ENCODE measurements at regions of chr9 and their contacts with region 1.

Region 1: GRCh38 chr9:130707225-130707976 is 13.8 kb downstream of the EXOSC2 start:
- DNase-seq: peak in 2 of 3 donors; percentile 53 to 68
- ATAC-seq: peak; percentile 57 to 68 (median 64)
- H3K4me3 ChIP-seq: no peak overlapping the region
- H3K27ac ChIP-seq: no peak overlapping the region
- H3K4me1 ChIP-seq: no peaks in the 10 kb centered on the region
- H3K27me3 ChIP-seq: no peaks in the 10 kb centered on the region
- CTCF ChIP-seq: peak; percentile 66 to 83 (median 80)
- POLR2A ChIP-seq: no peak

Region 2: DNA sequence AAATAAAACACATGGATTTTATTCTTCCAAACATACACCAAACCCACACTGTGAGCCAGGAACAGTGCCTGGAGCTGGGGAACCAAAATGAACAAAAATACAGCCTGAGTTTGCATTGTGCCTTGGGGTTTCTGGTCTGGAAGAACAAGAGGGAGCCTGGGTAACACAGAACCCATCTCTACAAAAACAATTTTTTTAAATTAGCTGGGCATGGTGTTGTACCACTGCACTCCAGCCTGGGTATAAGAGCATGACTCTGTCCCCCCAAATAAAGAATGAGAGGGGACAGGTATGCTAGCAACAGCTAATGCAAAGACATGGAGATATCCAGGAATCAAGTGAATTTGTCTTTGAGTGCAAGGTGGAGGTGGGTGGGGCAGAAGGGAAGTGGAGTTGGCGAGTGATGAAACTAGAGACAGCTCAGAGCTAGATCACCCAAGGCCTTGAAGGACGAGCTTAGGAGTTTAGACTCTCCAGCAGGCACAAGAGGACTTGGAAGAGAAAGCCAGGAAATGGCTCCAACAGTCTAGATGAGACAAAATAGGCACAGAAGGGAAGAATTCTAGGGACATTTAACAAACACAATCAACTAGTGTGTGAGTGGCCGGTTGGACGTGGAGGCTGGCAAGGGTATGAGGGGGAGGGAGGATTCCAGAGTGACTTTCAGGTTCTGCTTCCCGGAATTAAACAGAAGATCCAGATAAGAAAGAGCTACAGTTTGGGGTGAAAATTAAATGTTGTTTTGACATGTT is 711.8 kb before region 1 on chr9:
- intact Hi-C with region 1: no loop called
- DNase-seq: no peak
- ATAC-seq: peak; percentile 25 to 66 (median 50)
- H3K4me3 ChIP-seq: no peak overlapping the region
- H3K27ac ChIP-seq: peak overlapping the region; percentile 6 to 52 (median 33)
- H3K4me1 ChIP-seq: peaks cover 0 to 9% (median 0%) of the 10 kb centered on the region in 4 donors
- H3K27me3 ChIP-seq: no peaks in the 10 kb centered on the region
- CTCF ChIP-seq: no peak
- POLR2A ChIP-seq: no peak

Region 3: DNA sequence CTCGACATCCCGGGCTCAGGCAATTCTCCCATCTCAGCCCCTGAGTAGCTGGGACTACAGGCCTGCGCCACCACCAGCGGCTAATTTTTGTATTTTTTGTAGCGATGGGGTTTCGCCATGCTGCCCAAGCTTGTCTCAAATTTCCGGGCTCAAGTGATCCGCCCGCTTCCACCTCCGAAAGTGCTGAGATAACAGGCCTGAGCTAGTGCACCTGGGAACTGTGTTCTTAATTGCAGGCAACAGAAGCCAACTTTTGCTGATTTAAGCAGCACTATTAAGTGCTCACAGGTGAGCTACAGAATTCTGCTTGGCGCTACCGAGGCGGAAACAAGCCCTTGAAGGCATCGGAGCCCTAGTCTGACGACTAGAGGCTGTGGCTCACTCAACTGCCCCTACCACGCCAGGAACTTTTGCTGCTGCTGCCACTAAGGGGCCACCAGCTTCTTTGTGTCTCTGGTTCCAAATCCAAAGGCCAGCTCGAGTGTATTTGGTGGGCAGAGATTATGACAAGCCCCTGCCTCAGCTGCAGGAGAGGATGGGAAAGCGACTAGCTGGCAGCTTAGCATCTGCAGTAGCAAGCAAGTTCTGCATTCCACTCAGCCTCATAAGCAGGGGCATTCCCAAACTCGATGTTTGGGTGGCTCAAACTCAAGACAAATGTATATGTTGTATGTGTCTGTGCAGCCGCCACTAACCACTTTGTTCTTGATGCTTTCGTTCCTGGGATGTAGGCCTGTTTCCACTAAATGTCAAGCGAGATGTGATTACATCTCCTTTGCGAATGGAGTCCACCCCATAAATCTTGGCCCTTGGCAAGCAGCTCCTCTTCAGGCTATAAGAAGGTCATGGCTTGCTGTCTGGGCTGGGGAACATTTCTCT is 452.4 kb before region 1 on chr9:
- intact Hi-C with region 1: no loop called
- DNase-seq: peak in 1 of 3 donors; percentile 16
- ATAC-seq: no peak
- H3K4me3 ChIP-seq: no peak overlapping the region
- H3K27ac ChIP-seq: no peak overlapping the region
- H3K4me1 ChIP-seq: peaks cover 0 to 14% (median 6%) of the 10 kb centered on the region in 4 donors
- H3K27me3 ChIP-seq: no peaks in the 10 kb centered on the region
- CTCF ChIP-seq: no peak
- POLR2A ChIP-seq: no peak

Region 4: DNA sequence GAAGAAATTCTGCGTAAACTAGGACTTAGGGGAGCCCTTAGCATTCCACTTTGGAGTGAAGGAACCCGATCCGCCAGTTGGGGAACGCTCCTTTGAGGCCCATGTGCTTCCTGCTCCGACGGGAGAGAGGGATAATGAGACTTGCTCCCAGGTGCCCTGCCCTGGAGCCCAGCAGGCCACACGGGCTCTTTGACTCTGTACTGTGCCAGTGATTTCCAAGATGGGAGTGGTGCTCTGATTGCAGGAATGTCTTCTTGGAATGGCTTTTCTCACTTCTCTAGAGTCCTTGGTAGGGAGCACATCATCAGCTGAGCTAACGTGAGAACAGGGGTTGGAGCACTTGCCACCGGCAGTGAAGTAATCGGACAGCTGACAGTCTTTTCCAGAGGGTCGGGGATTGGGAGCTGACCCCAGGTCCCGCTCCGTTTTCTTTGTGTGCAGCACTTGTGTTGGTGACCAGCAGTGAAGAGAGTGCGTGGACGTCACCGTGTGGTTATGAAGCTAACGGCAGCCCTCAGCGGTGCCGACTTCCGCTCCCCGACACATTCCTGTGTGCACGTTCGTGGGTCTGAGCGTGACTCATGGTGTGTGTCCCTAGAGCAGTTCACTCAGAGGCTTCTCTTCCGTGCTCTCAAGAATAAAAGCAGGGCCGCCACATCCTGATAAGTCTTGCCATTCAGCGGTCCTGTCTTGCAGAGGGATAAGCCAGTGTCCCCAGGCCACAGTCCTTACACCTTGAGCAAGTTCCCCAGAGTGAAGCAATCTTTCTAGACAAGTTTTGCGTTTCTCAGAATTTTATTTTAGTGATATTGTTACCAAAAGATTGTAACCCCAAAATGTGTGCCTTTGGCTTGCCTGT is 153.3 kb after region 1 on chr9:
- intact Hi-C with region 1: loop called (anchors 5 kb)
- DNase-seq: peak in 2 of 3 donors; percentile 68 to 70
- ATAC-seq: peak; percentile 70 to 87 (median 82)
- H3K4me3 ChIP-seq: no peak overlapping the region
- H3K27ac ChIP-seq: peak overlapping the region in 2 of 3 donors; percentile 16 to 68
- H3K4me1 ChIP-seq: peaks cover 0 to 3% (median 0%) of the 10 kb centered on the region in 4 donors
- H3K27me3 ChIP-seq: no peaks in the 10 kb centered on the region
- CTCF ChIP-seq: peak in 2 of 4 donors; percentile 12 to 19
- POLR2A ChIP-seq: no peak

Measured in right lobe of liver (tissue), 6 donors.